Posterior vena cava (tissue), 2 donors: ENCODE measurements at regions of chr9 and their contacts with region 1.

Region 1: DNA sequence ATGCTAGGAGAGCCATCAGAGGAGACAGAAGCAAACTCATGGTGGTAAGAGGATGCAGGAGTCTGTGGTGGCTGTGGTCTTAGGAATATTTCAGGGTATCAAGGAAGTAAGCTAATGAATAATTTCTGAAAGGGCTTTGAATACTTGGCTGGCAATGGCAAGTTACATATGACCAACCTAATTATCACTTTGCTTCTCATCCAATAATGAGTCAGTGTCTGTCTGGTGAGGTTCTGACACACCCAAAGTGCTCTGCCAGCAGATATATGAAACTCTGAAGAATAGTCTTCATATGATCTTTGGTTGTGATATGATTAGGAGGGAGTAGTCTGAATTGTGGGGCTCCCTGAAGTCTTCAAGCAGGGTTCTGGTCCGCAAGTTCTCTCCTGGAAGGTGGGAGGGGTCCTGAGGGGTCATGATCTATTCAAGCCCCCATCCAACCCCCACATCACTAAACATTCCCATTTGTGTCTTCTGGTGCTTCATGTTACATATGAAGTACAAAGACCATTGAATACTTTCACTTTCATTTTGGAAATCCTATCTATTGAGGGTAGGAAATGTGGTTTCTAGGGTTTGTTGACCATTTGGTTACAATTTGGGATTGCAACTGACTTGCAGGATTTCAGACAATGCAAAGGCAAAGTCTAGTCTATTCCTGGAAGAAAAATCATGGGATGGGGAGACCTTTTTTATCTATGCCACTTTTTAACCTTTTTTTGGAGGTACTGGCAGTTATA is 199.9 kb upstream of the CDKN2B start:
- DNase-seq: no peak

Region 2: GRCh38 chr9:21491742-21492141 is 717.3 kb before region 1 on chr9:
- intact Hi-C with region 1: loop called in 1 of 2 experiments (anchors 5 kb)
- DNase-seq: no peak